ENCODE measurements at regions of chr3 and their contacts with region 1.

Region 1: GRCh38 chr3:126357295-126358037 is at the start of gene KLF15:
- DNase-seq: peak; percentile 81 to 92
- ATAC-seq: peak; percentile 37 to 48
- H3K4me3 ChIP-seq: peak within 1 kb of the TSS; percentile 82 to 98 (median 89)
- H3K27ac ChIP-seq: peak within 1 kb of the TSS; percentile 91 to 99 (median 98)
- H3K4me1 ChIP-seq: peaks cover 35 to 48% of the 10 kb centered on the region in 2 donors
- H3K27me3 ChIP-seq: no peaks in the 10 kb centered on the region
- CTCF ChIP-seq: peak in 1 of 5 experiments; percentile 8
- POLR2A ChIP-seq: peak; percentile 98 to 100
- total RNA-seq, gene KLF15: 75.1 to 157 (median 106) TPM

Region 2: GRCh38 chr3:125916376-125916978 is 441.0 kb before region 1 on chr3:
- in situ Hi-C with region 1: no loop called
- intact Hi-C with region 1: loop called (anchors 5 kb)
- DNase-seq: no peak
- ATAC-seq: peak; percentile 79 to 85
- H3K4me3 ChIP-seq: peak overlapping the region; percentile 71 to 98 (median 84)
- H3K27ac ChIP-seq: peak overlapping the region; percentile 83 to 91 (median 90)
- H3K4me1 ChIP-seq: peaks cover 4 to 8% of the 10 kb centered on the region in 2 donors
- H3K27me3 ChIP-seq: no peaks in the 10 kb centered on the region
- CTCF ChIP-seq: peak in 2 of 5 experiments; percentile 21 to 28
- POLR2A ChIP-seq: no peak

Region 3: GRCh38 chr3:126180477-126181397 is 176.7 kb before region 1 on chr3 and contains the start of gene ALDH1L1:
- in situ Hi-C with region 1: no loop called
- intact Hi-C with region 1: loop called (anchors 1 kb)
- DNase-seq: peak; percentile 94 to 97
- ATAC-seq: peak; percentile 86
- H3K4me3 ChIP-seq: peak within 1 kb of the TSS; percentile 77 to 93 (median 88)
- H3K27ac ChIP-seq: peak within 1 kb of the TSS; percentile 99 to 100 (median 100)
- H3K4me1 ChIP-seq: peaks cover 29 to 49% of the 10 kb centered on the region in 2 donors
- H3K27me3 ChIP-seq: no peaks in the 10 kb centered on the region
- CTCF ChIP-seq: peak in 1 of 5 experiments; percentile 14
- POLR2A ChIP-seq: peak; percentile 80 to 83
- total RNA-seq, gene ALDH1L1: 43.5 to 108 (median 69.0) TPM

Region 4: DNA sequence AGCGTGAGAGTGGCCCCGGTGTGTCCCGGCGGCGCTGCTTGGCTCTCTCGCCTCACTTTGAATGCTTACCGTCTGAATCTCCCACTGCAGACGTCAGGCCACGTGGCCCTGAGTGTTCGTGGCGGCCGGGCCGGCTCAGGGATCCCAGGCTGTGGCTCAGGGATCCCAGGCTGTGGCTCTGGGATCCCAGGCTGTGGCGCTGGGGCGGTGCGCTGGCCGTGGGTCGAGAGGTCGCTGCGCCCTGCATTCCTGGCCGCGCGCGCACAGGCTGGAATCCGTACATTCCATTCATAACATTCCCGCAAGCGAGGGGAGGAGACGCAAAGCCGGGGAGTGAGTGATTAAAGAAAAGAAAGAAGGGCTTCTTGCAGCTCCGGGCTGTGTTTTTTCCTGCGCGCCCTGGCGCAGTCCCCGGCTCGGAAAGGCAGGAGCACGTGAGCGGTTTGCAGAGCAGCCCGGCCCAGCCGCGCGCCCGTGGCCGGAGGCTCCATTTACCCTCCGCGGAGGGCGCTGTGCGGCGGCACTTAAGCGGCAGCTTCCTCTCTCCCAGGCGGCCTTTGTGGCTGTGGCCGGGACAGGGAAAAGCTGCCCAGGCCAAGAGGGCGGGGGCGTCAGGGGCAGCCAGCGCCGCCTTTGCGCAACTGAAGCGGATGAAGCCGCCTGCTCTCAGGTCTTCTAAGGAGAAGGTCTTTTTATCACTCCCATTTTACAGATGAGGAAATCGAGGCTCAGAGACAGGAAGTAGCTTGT is 90.1 kb before region 1 on chr3:
- in situ Hi-C with region 1: no loop called
- intact Hi-C with region 1: loop called (anchors 1 kb)
- DNase-seq: peak; percentile 61 to 83
- ATAC-seq: peak; percentile 55 to 63
- H3K4me3 ChIP-seq: peak overlapping the region; percentile 11 to 53 (median 46)
- H3K27ac ChIP-seq: peak overlapping the region; percentile 86 to 92 (median 90)
- H3K4me1 ChIP-seq: peaks cover 44 to 51% of the 10 kb centered on the region in 2 donors
- H3K27me3 ChIP-seq: no peaks in the 10 kb centered on the region
- CTCF ChIP-seq: peak in 2 of 5 experiments; percentile 36 to 40
- POLR2A ChIP-seq: peak; percentile 48 to 72

Region 5: GRCh38 chr3:126475413-126476114 is 118.1 kb after region 1 on chr3 and contains the start of gene ZXDC:
- in situ Hi-C with region 1: no loop called
- intact Hi-C with region 1: loop called (anchors 1 kb)
- DNase-seq: peak; percentile 88 to 94
- ATAC-seq: peak; percentile 64 to 67
- H3K4me3 ChIP-seq: peak within 1 kb of the TSS; percentile 70 to 93 (median 72)
- H3K27ac ChIP-seq: peak within 1 kb of the TSS; percentile 95 to 97 (median 96)
- H3K4me1 ChIP-seq: peaks cover 41 to 46% of the 10 kb centered on the region in 2 donors
- H3K27me3 ChIP-seq: no peaks in the 10 kb centered on the region
- CTCF ChIP-seq: peak; percentile 18 to 68 (median 67)
- POLR2A ChIP-seq: peak; percentile 93 to 95
- total RNA-seq, gene ZXDC: 40.9 to 54.2 (median 45.4) TPM

Region 6: DNA sequence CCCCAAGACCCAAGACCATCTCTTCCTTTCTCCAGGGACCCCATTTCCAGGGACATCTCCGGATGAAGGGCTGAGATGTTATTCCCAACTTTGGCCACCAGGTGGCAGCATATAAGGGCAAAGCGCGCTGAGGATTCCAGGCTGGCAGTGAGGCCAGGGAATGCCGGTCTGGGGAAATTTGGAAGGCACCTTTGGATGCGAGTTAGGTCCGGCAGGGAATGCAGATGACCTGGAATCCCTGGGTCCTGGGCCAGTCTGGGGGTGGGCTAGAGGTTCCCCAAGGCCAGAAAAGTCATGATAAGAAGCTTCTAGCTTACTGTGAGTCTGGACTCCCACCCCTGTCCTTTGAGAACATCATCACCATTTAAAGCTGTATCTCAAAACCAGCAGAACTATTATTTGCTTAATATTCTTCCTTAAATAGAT is 164.9 kb after region 1 on chr3:
- in situ Hi-C with region 1: no loop called
- intact Hi-C with region 1: no loop called
- DNase-seq: peak in 1 of 2 donors; percentile 32
- ATAC-seq: peak in 1 of 2 donors; percentile 70
- H3K4me3 ChIP-seq: no peak overlapping the region
- H3K27ac ChIP-seq: no peak overlapping the region
- H3K4me1 ChIP-seq: peaks cover 0 to 7% of the 10 kb centered on the region in 2 donors
- H3K27me3 ChIP-seq: peaks cover 0 to 8% (median 0%) of the 10 kb centered on the region in 3 donors
- CTCF ChIP-seq: peak; percentile 72 to 92 (median 85)
- POLR2A ChIP-seq: no peak

Measured in gastrocnemius medialis (tissue), 4 donors.